ENCODE measurements at regions of chr5 and their contacts with region 1.

Region 1: GRCh38 chr5:80654391-80655230 is at the starts of genes DHFR and MSH3:
- DNase-seq: peak; percentile 78 to 96 (median 90)
- ATAC-seq: peak; percentile 76
- H3K4me3 ChIP-seq: peak within 1 kb of the TSS; percentile 66 to 83
- H3K4me3 Mint-ChIP-seq: peak within 1 kb of the TSS; percentile 87
- H3K27ac ChIP-seq: peak within 1 kb of the TSS; percentile 71 to 89
- H3K27ac Mint-ChIP-seq: peak within 1 kb of the TSS; percentile 96
- H3K4me1 ChIP-seq: peaks cover 27% of the 10 kb centered on the region
- H3K4me1 Mint-ChIP-seq: peaks cover 27% of the 10 kb centered on the region
- H3K27me3 ChIP-seq: no peaks in the 10 kb centered on the region
- H3K27me3 Mint-ChIP-seq: no peaks in the 10 kb centered on the region
- CTCF ChIP-seq: no peak
- total RNA-seq, gene DHFR: 5.9 TPM
- total RNA-seq, gene MSH3: 8.5 to 8.6 TPM

Region 2: DNA sequence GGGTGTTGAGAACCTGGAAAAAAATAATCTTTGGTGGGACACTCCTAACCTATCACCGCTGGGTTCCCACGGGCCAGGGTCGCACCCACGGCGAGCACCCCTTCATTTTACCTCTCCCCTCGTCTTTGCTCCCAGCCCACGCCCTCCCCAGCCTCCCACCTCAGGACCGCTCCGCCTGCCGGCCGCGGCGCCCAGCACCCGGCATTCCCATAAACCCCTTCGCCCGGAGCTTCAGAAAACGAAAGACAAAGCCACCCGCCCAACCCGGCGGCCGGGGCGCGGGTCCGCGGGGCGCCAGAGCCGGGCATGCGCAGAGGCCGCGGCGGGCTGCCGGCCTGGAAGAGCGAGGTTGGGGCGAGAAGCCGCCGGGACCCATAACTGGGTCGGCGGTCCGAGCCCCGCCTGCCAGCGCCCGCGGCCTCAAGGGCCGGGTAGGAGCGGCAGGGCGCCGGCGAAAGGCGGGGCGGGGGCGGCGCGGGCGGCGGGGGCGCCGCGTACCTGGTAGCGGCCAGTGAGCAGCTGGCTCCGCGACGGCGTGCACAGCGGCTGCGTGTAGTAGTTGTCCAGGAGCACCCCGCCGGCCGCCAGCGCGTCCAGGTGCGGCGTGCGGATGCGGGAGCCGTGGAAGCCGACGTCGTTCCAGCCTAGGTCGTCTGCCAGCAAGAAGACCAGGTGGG is 1670.0 kb before region 1 on chr5:
- CTCF ChIA-PET with region 1: no interaction called
- POLR2A ChIA-PET with region 1: no interaction called
- intact Hi-C with region 1: loop called in 1 of 2 experiments (anchors 5 kb)
- DNase-seq: peak; percentile 55 to 90 (median 75)
- ATAC-seq: peak; percentile 74
- H3K4me3 ChIP-seq: peak overlapping the region; percentile 54 to 68
- H3K4me3 Mint-ChIP-seq: peak overlapping the region; percentile 94
- H3K27ac ChIP-seq: peak overlapping the region; percentile 40 to 75
- H3K27ac Mint-ChIP-seq: peak overlapping the region; percentile 92
- H3K4me1 ChIP-seq: peaks cover 14% of the 10 kb centered on the region
- H3K4me1 Mint-ChIP-seq: peaks cover 28% of the 10 kb centered on the region
- H3K27me3 ChIP-seq: no peaks in the 10 kb centered on the region
- H3K27me3 Mint-ChIP-seq: no peaks in the 10 kb centered on the region
- CTCF ChIP-seq: no peak

Region 3: GRCh38 chr5:79612667-79613198 is 1041.9 kb before region 1 on chr5:
- CTCF ChIA-PET with region 1: no interaction called
- POLR2A ChIA-PET with region 1: no interaction called
- intact Hi-C with region 1: loop called (anchors 5 to 10 kb)
- DNase-seq: no peak
- ATAC-seq: no peak
- H3K4me3 ChIP-seq: peak overlapping the region; percentile 71 to 97
- H3K4me3 Mint-ChIP-seq: peak overlapping the region; percentile 96
- H3K27ac ChIP-seq: peak overlapping the region; percentile 89 to 91
- H3K27ac Mint-ChIP-seq: peak overlapping the region; percentile 98
- H3K4me1 ChIP-seq: peaks cover 26% of the 10 kb centered on the region
- H3K4me1 Mint-ChIP-seq: peaks cover 39% of the 10 kb centered on the region
- H3K27me3 ChIP-seq: no peaks in the 10 kb centered on the region
- H3K27me3 Mint-ChIP-seq: peaks cover 9% of the 10 kb centered on the region
- CTCF ChIP-seq: no peak

Region 4: DNA sequence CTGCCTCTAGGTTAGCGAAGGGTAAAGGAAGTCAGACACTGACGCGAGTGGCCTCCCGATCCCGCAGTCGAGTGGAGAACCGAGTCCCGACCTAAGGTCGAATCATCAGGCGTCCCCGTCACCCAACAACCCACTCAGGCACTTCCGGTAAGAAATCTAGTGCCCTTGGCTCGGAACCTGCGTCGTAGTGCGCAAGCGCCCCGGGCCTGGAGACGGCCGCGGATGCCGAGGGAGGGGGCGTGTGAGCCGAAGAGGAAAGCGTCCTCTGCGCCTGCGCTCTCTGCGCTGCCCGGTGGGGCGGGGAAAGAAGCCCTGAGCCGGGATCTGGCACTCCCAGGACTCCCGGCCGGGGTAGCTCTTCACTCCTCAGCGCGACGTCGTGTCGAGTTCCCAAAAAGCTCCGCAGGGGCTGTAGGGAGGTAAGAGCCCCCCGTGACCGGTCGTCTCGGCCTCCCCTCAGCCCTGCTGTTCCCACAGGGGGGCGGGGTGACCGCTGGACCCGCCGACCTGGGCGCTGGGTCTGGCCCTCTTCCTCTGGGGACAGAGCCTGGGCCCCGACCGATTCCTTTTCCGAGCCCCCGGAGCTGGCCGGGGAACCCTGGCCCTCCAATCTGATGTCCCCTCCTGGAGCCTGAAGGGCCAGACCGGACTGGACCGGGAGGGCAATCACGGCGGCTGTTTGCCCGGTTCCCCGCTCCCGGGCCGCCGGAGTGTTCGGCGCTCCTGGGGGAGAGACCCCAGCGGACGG is 246.7 kb before region 1 on chr5 and contains the start of gene ZFYVE16:
- CTCF ChIA-PET with region 1: no interaction called
- POLR2A ChIA-PET with region 1: no interaction called
- intact Hi-C with region 1: loop called (anchors 1 to 2 kb)
- DNase-seq: peak; percentile 91 to 99 (median 97)
- ATAC-seq: peak; percentile 88
- H3K4me3 ChIP-seq: peak within 1 kb of the TSS; percentile 86 to 94
- H3K4me3 Mint-ChIP-seq: peak within 1 kb of the TSS; percentile 99
- H3K27ac ChIP-seq: peak within 1 kb of the TSS; percentile 78 to 93
- H3K27ac Mint-ChIP-seq: peak within 1 kb of the TSS; percentile 100
- H3K4me1 ChIP-seq: peaks cover 12% of the 10 kb centered on the region
- H3K4me1 Mint-ChIP-seq: peaks cover 28% of the 10 kb centered on the region
- H3K27me3 ChIP-seq: no peaks in the 10 kb centered on the region
- H3K27me3 Mint-ChIP-seq: no peaks in the 10 kb centered on the region
- CTCF ChIP-seq: no peak
- total RNA-seq, gene ZFYVE16: 7.6 to 9.9 TPM

Region 5: GRCh38 chr5:80960531-80961375 is 306.1 kb after region 1 on chr5:
- CTCF ChIA-PET with region 1: no interaction called
- POLR2A ChIA-PET with region 1: no interaction called
- intact Hi-C with region 1: loop called in 1 of 2 experiments (anchors 5 kb)
- DNase-seq: peak; percentile 5 to 79 (median 51)
- ATAC-seq: peak; percentile 30
- H3K4me3 ChIP-seq: peak overlapping the region; percentile 61 to 81
- H3K4me3 Mint-ChIP-seq: peak overlapping the region; percentile 95
- H3K27ac ChIP-seq: peak overlapping the region in 1 of 2 experiments; percentile 50
- H3K27ac Mint-ChIP-seq: peak overlapping the region; percentile 95
- H3K4me1 ChIP-seq: peaks cover 53% of the 10 kb centered on the region
- H3K4me1 Mint-ChIP-seq: peaks cover 66% of the 10 kb centered on the region
- H3K27me3 ChIP-seq: peaks cover 0 to 7% of the 10 kb centered on the region in 2 experiments
- H3K27me3 Mint-ChIP-seq: peaks cover 4% of the 10 kb centered on the region
- CTCF ChIP-seq: no peak

Region 6: GRCh38 chr5:81751009-81751835 is 1096.6 kb after region 1 on chr5 and contains the start of gene SSBP2:
- CTCF ChIA-PET with region 1: no interaction called
- POLR2A ChIA-PET with region 1: no interaction called
- intact Hi-C with region 1: loop called in 1 of 2 experiments (anchors 5 kb)
- DNase-seq: peak; percentile 99 to 100 (median 99)
- ATAC-seq: peak; percentile 90
- H3K4me3 ChIP-seq: peak within 1 kb of the TSS; percentile 75 to 76
- H3K4me3 Mint-ChIP-seq: peak within 1 kb of the TSS; percentile 97
- H3K27ac ChIP-seq: peak within 1 kb of the TSS; percentile 76 to 84
- H3K27ac Mint-ChIP-seq: peak within 1 kb of the TSS; percentile 94
- H3K4me1 ChIP-seq: peaks cover 17% of the 10 kb centered on the region
- H3K4me1 Mint-ChIP-seq: peaks cover 33% of the 10 kb centered on the region
- H3K27me3 ChIP-seq: no peaks in the 10 kb centered on the region
- H3K27me3 Mint-ChIP-seq: no peaks in the 10 kb centered on the region
- CTCF ChIP-seq: no peak
- total RNA-seq, gene SSBP2: 21.7 to 22.5 TPM

Region 7: GRCh38 chr5:82278095-82278918 is 1623.7 kb after region 1 on chr5 and contains the start of gene RPS23:
- CTCF ChIA-PET with region 1: no interaction called
- POLR2A ChIA-PET with region 1: no interaction called
- intact Hi-C with region 1: loop called (anchors 2 to 5 kb)
- DNase-seq: peak; percentile 73 to 94 (median 86)
- ATAC-seq: peak; percentile 95
- H3K4me3 ChIP-seq: peak within 1 kb of the TSS; percentile 63 to 94
- H3K4me3 Mint-ChIP-seq: peak within 1 kb of the TSS; percentile 97
- H3K27ac ChIP-seq: peak within 1 kb of the TSS; percentile 71 to 84
- H3K27ac Mint-ChIP-seq: peak within 1 kb of the TSS; percentile 96
- H3K4me1 ChIP-seq: peaks cover 18% of the 10 kb centered on the region
- H3K4me1 Mint-ChIP-seq: peaks cover 44% of the 10 kb centered on the region
- H3K27me3 ChIP-seq: no peaks in the 10 kb centered on the region
- H3K27me3 Mint-ChIP-seq: no peaks in the 10 kb centered on the region
- CTCF ChIP-seq: no peak
- total RNA-seq, gene RPS23: 3,866 to 4,021 TPM

Measured in CD8-positive, alpha-beta T cell (primary cell).